ENCODE measurements at regions of chr10 and their contacts with region 1.

Region 1: DNA sequence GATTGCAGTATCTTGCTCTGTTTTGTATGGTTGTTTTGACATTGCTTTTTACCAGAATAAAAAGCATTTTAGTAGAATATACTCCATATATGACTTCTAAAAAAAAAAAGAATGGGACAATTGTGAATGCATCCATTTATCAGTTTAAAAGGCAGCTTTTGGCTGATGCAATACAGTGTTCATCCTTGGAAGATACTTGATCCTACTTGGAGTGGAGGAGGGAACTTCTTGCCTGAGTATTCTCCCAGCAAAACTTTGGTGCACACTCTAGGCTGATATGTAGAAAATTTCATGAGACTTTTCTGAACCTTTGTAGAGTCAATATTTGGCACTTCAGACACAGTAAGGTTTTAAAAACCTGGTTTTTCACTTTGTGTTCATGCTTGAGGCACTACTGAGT is 40.2 kb downstream of the WDR11 start:
- DNase-seq: no peak
- H3K4me3 ChIP-seq: no peak overlapping the region
- CTCF ChIP-seq: no peak
- POLR2A ChIP-seq: no peak

Region 2: GRCh38 chr10:120221873-120222485 is 669.4 kb before region 1 on chr10:
- intact Hi-C with region 1: loop called (anchors 5 kb)
- DNase-seq: no peak
- H3K4me3 ChIP-seq: no peak overlapping the region
- CTCF ChIP-seq: no peak
- POLR2A ChIP-seq: no peak

Region 3: DNA sequence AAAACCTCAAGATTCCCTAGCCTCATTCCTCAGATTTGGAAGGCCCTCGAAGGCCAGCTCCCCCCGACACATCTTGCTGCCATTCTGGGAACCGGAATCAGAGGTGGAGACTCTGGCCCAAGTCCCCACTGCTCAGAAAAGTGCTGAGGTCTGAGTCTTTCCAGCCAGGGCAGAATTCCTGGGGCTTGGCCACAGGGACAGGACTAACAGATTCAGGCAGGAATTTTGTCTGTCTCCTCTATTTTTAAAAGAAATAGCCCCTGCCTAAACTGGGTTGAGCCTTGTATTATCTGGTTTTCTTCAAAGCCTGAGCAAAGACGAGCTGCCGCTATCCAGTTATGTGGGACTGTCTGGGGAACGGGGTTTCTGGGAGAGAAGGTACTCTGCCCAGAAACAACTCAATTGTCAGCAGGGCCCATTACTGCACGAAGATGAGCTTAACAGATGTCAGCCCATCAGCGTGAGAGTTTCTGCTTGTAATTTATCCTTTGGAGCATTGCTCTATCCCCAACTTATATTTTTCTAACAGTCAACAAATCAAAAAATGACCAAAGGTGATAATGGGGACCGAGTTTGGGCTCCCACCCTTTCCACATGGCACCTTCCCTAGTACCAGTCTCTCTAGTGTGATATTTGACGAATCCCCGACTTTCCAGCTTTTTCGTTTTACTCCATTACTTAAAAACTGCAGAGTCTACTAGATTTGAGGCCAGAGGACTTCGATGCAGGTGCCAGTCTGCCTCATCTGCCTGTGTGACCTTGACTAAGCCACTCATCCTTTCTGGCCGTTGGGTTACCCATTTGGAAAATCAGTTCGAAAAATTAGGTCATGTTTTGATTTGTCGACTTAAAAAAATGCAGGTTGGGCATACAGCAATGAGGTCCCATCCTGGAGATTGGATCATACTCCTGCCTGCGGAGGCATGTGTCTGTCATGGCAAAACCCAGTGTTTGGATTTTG is 70.7 kb after region 1 on chr10:
- intact Hi-C with region 1: no loop called
- DNase-seq: no peak
- H3K4me3 ChIP-seq: no peak overlapping the region
- CTCF ChIP-seq: no peak
- POLR2A ChIP-seq: no peak